K562 (cell line): ENCODE measurements at regions of chr19 and their contacts with region 1.

Region 1: GRCh38 chr19:1241417-1242095 is at the start of gene ATP5F1D:
- DNase-seq: peak; percentile 74 to 98 (median 86)
- ATAC-seq: peak; percentile 73
- H3K4me3 ChIP-seq: peak within 1 kb of the TSS; percentile 100
- H3K27ac ChIP-seq: peak within 1 kb of the TSS; percentile 89
- H3K4me1 ChIP-seq: peaks cover 49 to 98% of the 10 kb centered on the region in 2 experiments
- H3K27me3 ChIP-seq: no peaks in the 10 kb centered on the region
- CTCF ChIP-seq: 0 out of 6 replicates have a peak, but pooled peaks of 1 of the 3 experiments have one; percentile 9
- EP300 ChIP-seq: peak; percentile 52; the same call in 1 of the 2 replicates
- POLR2A ChIP-seq: no peak; the same call in 1 of the 2 replicates
- RAD21 ChIP-seq: no peak
- polyA plus RNA-seq, gene ATP5F1D: 9.7 to 23.3 TPM

Region 2: GRCh38 chr19:920051-920864 is 321.3 kb before region 1 on chr19:
- CTCF ChIA-PET with region 1: interaction called, 29 read pairs
- POLR2A ChIA-PET with region 1: no interaction called
- in situ Hi-C with region 1: loop called (anchors 5 kb)
- intact Hi-C with region 1: loop called (anchors 1 kb)
- DNase-seq: no peak
- ATAC-seq: no peak
- H3K4me3 ChIP-seq: no peak overlapping the region
- H3K27ac ChIP-seq: no peak overlapping the region
- H3K4me1 ChIP-seq: peaks cover 8 to 78% of the 10 kb centered on the region in 2 experiments; a peak in 4 of 5 replicates
- H3K27me3 ChIP-seq: no peaks in the 10 kb centered on the region
- CTCF ChIP-seq: no peak
- EP300 ChIP-seq: no peak
- POLR2A ChIP-seq: no peak
- RAD21 ChIP-seq: no peak

Region 3: GRCh38 chr19:1113033-1113985 is 128.2 kb before region 1 on chr19:
- CTCF ChIA-PET with region 1: interaction called, 21 read pairs
- POLR2A ChIA-PET with region 1: interaction called, 4 read pairs
- in situ Hi-C with region 1: no loop called
- intact Hi-C with region 1: loop called (anchors 2 kb)
- DNase-seq: peak; percentile 96 to 97 (median 96)
- ATAC-seq: peak; percentile 89
- H3K4me3 ChIP-seq: no peak overlapping the region
- H3K27ac ChIP-seq: peak overlapping the region; percentile 78
- H3K4me1 ChIP-seq: peaks cover 9 to 81% of the 10 kb centered on the region in 2 experiments
- H3K27me3 ChIP-seq: no peaks in the 10 kb centered on the region
- CTCF ChIP-seq: peak; percentile 86 to 93 (median 89)
- EP300 ChIP-seq: no peak
- POLR2A ChIP-seq: no peak; the same call in 1 of the 2 replicates
- RAD21 ChIP-seq: peak; percentile 80 to 84

Region 4: DNA sequence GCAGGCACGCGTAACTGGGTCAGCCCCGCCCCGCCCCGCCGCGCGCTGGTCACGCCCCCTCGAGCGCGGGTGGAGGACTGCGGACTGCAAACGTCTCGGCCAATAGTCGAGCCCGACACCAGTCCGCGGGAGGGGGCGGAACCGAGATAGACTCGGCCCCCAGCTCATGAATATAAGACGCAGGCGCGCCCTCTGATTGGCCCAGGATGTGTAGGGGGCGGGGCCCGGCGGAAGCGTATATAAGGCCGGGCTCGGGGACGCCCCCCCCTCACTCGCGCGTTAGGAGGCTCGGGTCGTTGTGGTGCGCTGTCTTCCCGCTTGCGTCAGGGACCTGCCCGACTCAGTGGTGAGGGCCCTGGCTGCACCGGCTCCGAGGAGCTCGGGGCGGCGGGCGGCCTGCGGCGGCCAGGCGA is 27.5 kb after region 1 on chr19 and contains the start of gene CIRBP:
- CTCF ChIA-PET with region 1: interaction called, 51 read pairs
- POLR2A ChIA-PET with region 1: interaction called, 90 read pairs
- in situ Hi-C with region 1: no loop called
- intact Hi-C with region 1: loop called (anchors 1 kb)
- DNase-seq: peak; percentile 86 to 99 (median 92)
- ATAC-seq: peak; percentile 71
- H3K4me3 ChIP-seq: peak within 1 kb of the TSS; percentile 68
- H3K27ac ChIP-seq: peak within 1 kb of the TSS; percentile 92
- H3K4me1 ChIP-seq: peaks cover 71 to 97% of the 10 kb centered on the region in 2 experiments
- H3K27me3 ChIP-seq: no peaks in the 10 kb centered on the region
- CTCF ChIP-seq: no peak
- EP300 ChIP-seq: no peak
- POLR2A ChIP-seq: peak; percentile 99
- RAD21 ChIP-seq: 0 out of 4 replicates have a peak, but pooled peaks of 1 of the 2 experiments have one; percentile 5
- polyA plus RNA-seq, gene CIRBP: 20.5 to 21.4 TPM